ENCODE measurements at regions of chr5 and their contacts with region 1.

Region 1: DNA sequence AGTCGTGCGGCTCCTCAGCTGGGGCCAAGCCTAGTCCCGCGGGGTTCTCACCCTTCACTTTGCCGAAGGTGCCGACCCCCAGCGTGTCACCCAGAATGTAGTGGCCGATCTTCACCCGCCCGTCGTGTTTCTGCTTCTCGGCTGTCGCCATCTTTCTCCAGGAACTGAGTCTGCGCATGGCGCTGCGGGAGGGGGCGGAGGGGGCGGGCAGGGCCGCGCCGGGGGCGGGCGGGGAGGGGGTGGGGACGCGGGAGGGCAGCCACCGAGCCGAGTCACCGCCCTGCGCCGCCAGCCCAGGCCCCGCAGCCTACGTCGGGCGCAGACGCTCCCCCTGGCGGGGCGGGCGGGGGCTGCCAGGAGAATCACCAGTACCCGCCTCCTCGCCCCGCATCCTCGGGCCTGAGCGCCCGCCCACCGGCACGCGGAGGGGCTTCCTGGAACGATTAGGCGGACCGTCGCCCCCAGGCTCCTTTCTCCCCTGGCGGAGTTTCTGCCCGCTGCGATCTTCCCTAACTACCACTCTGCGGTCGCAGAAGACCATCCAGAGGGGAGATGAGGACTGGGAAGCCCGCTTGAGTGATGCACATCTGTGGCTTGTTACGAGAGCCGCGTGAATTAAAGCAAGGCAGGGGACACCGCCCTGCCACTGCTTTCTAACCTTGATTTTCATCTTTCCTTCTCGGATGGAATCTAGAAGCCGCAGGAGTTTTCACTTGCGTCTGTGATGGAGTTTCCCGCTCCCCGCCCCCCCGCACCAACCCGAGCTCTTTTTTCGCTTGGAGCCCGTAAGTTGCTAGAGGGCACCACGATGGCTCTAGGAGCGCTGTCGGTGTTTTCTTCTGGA is at the start of gene PRKAA1:
- DNase-seq: peak; percentile 89
- H3K4me3 ChIP-seq: peak within 1 kb of the TSS; percentile 91
- H3K27ac ChIP-seq: peak within 1 kb of the TSS; percentile 79
- H3K4me1 ChIP-seq: peaks cover 17% of the 10 kb centered on the region
- CTCF ChIP-seq: peak; percentile 36; the same call in 1 of the 2 replicates
- total RNA-seq, gene PRKAA1: 17.9 and 30.0 TPM in 2 replicates

Region 2: DNA sequence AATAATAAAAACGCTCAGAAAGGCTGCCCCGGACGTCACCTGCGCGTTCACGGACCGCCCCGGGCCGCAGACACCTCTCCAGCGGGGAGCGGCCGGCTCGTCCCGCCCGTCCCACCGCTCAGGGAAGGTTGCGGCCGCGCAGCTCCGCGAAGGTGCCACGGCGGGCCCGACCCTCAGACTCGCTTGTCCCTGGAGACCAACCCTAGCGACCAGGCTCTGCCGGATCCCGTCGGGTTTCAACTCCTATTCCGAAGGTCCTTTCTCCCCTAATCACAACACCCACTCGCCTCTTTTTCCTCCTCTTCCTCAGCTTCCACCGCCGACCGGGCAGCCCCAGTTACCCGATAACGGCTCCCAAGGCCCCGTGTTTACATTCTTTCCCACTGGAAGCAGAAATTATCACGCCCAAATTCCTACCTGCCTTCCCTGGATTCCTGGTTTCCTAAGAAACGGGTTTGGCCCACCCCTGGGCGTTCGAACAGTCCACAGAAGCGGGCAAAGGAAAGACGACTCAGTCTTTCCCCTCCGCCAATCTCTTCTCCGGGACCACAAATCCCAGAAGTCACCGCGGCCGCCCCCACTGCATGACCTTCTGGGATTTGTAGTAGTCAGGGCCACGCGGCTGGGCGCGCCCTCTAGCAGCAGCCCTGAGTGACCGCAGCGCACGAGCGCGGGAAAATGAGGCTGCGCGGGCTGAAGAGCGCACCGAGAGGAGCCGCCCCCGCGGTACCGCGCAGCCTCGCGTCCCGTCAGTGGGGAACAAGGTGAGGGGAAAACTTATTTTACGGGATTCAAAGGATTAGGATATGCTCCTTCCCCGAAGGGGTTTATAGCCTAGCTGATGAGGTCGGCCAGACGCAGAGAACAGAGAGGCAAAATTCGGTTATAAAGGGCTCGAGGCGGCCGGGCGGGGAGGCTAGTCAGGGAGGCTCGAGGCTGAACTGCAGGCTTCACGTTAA is 42.5 kb before region 1 on chr5 and contains the start of gene TTC33:
- CTCF ChIA-PET with region 1: no interaction called
- POLR2A ChIA-PET with region 1: interaction called, 3 read pairs
- intact Hi-C with region 1: loop called (anchors 1 kb)
- DNase-seq: peak; percentile 92
- H3K4me3 ChIP-seq: peak within 1 kb of the TSS; percentile 75
- H3K27ac ChIP-seq: peak within 1 kb of the TSS; percentile 66
- H3K4me1 ChIP-seq: peaks cover 16% of the 10 kb centered on the region
- CTCF ChIP-seq: peak; percentile 84
- total RNA-seq, gene TTC33: 15.9 and 22.9 TPM in 2 replicates

Measured in OCI-LY7 (cell line).